ENCODE measurements at regions of chr22 and their contacts with region 1.

Region 1: DNA sequence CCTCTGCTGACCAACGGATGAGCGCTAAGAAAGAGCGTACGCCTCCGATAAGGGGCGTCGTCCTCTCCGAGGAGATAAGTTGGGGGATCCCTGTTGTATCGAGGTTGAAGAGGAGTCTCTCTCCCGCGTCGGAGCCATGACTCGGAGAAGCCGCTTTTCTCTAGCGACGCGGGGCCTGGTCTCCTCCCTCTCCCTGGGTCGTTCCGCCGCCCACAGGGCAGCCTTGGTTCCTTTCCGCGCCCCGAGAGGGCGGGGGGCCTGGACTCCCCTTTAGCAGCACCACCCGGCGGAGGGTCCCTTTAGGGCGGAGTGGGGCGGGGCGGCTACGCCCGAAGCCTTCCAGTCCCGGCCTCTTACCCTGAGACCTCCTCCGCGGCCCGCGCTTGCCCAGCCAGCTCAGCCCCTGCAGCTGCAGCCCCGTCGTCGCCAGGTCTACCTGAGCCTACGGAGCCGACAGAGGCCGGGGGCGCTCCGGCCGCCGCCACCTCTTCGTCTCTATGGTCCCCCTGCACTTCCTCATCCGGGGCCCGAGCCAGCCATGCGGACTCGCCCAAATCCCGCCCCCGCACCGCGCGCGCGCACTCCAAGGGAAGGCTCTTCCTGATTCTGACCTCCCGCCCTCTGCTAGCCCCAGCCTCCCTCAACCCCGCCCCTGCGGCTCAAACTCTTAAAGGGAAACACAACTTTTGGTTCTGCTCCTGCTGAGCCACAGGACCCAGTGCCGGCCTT is at the start of gene PRR14L:
- DNase-seq: peak; percentile 99
- H3K4me3 Mint-ChIP-seq: peak within 1 kb of the TSS; percentile 80
- H3K27ac Mint-ChIP-seq: peak within 1 kb of the TSS; percentile 70
- H3K4me1 Mint-ChIP-seq: peaks cover 50% of the 10 kb centered on the region
- H3K27me3 Mint-ChIP-seq: no peaks in the 10 kb centered on the region
- total RNA-seq, gene PRR14L: 41.3 to 45.2 TPM

Region 2: DNA sequence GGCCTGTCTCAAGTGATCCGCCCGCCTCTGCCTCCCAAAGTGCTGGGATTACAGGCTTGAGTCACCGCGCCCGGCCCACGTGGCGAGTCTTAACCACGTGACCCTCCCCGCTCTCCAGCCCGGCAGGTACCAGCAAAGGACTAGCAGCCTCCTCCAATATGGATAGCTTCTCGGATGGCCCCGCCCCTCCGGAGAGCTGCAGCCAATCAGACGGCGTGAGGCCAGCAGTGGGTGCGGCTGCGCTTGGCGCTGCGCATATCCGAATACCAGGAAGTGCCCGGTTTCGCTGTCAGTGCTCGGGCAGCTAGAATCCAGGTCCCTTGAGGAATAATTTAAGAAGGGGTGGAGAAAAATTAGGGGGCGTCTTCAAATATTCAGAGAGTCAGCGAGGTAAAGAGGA is 73.1 kb before region 1 on chr22:
- CTCF ChIA-PET with region 1: no interaction called
- POLR2A ChIA-PET with region 1: no interaction called
- intact Hi-C with region 1: loop called (anchors 5 kb)
- DNase-seq: peak; percentile 96
- H3K4me3 Mint-ChIP-seq: peak overlapping the region; percentile 74
- H3K27ac Mint-ChIP-seq: peak overlapping the region; percentile 72
- H3K4me1 Mint-ChIP-seq: peaks cover 13% of the 10 kb centered on the region
- H3K27me3 Mint-ChIP-seq: no peaks in the 10 kb centered on the region

Region 3: DNA sequence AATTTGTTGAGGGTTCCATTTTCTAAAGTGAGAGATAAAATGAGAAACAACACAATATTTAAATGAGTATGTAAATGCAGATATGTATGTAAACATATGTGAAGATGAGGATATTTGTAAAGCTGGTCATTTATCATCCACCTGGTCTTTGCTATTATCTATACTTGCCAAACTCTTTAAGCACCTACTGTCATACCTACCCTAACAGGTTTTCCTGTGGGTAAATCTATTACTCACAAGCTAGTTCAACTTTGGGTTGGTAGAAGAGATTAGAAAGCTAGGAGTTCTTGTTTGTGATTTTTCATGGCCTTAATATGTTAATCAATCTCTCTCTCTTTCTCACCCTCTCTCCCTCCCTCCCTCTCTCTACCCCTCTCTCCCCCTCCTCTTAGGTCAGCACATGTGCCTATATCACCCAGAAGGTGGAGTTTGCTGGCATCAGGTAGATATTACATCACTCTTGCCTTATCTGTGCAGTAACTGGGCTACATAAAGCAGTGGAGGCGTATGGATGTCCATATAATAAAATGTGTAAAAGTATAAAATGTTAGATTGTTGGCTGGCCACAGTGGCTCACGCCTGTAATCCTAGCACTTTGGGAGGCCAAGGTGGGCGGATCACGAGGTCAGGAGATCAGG is 18.7 kb after region 1 on chr22:
- CTCF ChIA-PET with region 1: no interaction called
- POLR2A ChIA-PET with region 1: no interaction called
- intact Hi-C with region 1: no loop called
- DNase-seq: no peak
- H3K4me3 Mint-ChIP-seq: no peak overlapping the region
- H3K27ac Mint-ChIP-seq: no peak overlapping the region
- H3K4me1 Mint-ChIP-seq: peaks cover 10% of the 10 kb centered on the region
- H3K27me3 Mint-ChIP-seq: no peaks in the 10 kb centered on the region

Region 4: DNA sequence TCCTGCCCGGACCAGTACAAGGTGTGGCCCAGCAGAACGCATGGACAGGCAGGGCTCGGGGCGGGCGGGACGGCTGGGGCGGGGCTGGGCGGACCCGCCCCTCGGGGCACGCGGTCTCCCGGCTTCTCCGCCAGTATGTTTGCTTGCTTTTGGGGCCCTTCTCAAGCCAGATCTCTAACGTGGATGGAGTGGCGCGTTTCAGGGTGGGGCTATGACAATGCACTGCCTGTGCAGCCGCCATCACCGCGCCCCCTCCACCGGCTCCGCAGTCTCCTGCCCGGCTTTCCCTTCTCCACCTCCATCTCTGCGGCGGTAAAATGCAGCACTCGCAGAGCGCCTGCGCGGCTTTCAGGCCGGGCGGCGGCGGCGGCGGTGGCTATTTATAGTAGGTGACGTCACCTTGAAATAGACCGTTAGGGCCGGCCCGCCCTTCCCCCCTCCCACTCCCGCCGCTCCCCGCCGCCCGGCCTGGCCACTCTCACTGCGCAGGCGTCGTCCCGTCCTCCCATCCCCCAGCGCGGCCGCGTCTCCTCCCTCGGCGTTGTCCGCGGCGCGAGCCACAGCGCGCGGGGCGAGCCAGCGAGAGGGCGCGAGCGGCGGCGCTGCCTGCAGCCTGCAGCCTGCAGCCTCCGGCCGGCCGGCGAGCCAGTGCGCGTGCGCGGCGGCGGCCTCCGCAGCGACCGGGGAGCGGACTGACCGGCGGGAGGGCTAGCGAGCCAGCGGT is 194.3 kb after region 1 on chr22 and contains the start of gene YWHAH:
- CTCF ChIA-PET with region 1: interaction called, 3 read pairs
- POLR2A ChIA-PET with region 1: no interaction called
- intact Hi-C with region 1: loop called (anchors 1 kb)
- DNase-seq: peak; percentile 95
- H3K4me3 Mint-ChIP-seq: no peak within 1 kb of the TSS
- H3K27ac Mint-ChIP-seq: peak within 1 kb of the TSS; percentile 88
- H3K4me1 Mint-ChIP-seq: peaks cover 22% of the 10 kb centered on the region
- H3K27me3 Mint-ChIP-seq: no peaks in the 10 kb centered on the region
- total RNA-seq, gene YWHAH: 137 to 142 TPM

Region 5: GRCh38 chr22:32005453-32005852 is 255.7 kb after region 1 on chr22:
- CTCF ChIA-PET with region 1: no interaction called
- POLR2A ChIA-PET with region 1: no interaction called
- intact Hi-C with region 1: no loop called
- DNase-seq: no peak
- H3K4me3 Mint-ChIP-seq: no peak overlapping the region
- H3K27ac Mint-ChIP-seq: no peak overlapping the region
- H3K4me1 Mint-ChIP-seq: no peaks in the 10 kb centered on the region
- H3K27me3 Mint-ChIP-seq: peaks cover 20% of the 10 kb centered on the region

Measured in activated CD4-positive, alpha-beta memory T cell treated with anti-CD3 and anti-CD28 coated beads for 36 hours (primary cell).